Common myeloid progenitor, CD34-positive (primary cell): ENCODE measurements at regions of chr17 and their contacts with region 1.

Region 1: DNA sequence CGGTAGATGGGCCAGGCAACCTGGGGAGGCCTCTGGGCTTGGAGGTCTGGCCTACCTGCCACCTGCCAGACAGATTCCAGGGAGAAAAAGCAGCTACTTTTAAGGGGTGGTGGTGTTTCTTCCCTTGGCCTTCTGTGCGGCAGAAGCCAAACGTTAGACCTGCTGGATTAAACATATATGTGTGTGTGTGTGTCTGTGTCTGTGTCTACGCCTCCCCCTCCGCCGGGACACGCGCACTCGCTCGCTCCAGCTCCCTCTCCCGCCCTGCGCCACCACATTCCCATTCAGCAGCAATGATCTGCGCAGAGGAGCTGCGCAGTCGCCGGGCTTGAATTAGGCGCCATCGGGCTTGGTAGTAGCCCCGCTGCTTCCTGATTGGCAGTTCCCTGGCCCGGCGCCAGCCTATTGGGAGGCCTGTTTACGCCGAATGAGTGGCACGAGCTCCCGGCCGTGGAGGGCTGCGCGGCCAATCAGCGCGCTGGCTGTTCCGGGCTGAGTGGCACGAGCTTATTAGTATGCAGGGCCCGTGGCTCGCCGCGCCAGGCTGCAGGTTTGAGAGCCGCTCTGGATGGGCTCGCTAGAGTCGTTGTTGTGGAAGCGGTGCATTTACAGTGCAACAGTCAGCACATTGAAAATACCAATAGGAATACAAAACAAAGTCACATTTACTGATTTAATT is at the start of gene BAHCC1:
- DNase-seq: peak; percentile 99
- H3K4me3 ChIP-seq: peak within 1 kb of the TSS; percentile 46 to 93 (median 81)
- H3K27ac ChIP-seq: peak within 1 kb of the TSS; percentile 15 to 70
- H3K4me1 ChIP-seq: peaks cover 14 to 66% (median 63%) of the 10 kb centered on the region in 4 experiments
- H3K27me3 ChIP-seq: no peaks in the 10 kb centered on the region

Region 2: DNA sequence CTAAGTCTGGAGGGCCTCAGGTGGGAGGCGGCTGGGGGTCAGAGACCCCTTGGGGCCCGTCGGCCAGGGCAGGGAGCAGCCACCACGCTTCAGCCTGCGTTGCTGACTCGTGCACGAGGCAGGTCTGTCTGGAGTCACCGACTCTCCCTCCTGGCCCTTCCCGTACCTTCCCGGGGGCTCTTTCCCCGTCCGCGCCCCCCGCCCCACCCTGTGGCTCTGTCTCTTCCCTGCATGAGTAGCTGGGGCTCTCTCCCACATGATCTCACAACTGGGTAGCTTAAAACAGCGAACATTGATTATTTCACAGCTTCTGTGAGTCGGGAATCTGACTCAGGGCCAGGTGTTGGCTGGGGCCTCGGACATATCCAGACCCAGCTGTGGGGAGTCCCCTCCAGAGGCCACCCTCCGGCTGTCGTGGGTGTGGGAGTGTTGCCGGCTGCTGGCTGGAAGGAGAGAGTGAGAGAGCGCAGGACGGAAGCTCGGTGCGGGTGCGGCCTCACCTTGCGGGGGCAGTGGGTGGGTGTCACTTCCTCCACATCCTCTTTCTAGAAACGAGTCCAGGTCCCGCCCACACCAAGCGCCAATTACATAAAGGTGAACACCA is 17.5 kb after region 1 on chr17:
- CTCF ChIA-PET with region 1: interaction called, 24 read pairs
- POLR2A ChIA-PET with region 1: interaction called, 6 read pairs
- DNase-seq: peak; percentile 71 to 92 (median 89)
- H3K4me3 ChIP-seq: peak overlapping the region in 3 of 7 experiments; percentile 36 to 53 (median 48)
- H3K27ac ChIP-seq: no peak overlapping the region
- H3K4me1 ChIP-seq: peaks cover 2 to 65% (median 43%) of the 10 kb centered on the region in 4 experiments
- H3K27me3 ChIP-seq: no peaks in the 10 kb centered on the region

Region 3: GRCh38 chr17:81512560-81513371 is 117.7 kb after region 1 on chr17 and contains the start of gene ACTG1:
- CTCF ChIA-PET with region 1: interaction called, 3 read pairs
- POLR2A ChIA-PET with region 1: interaction called, 10 read pairs
- DNase-seq: peak; percentile 88 to 95 (median 94)
- H3K4me3 ChIP-seq: peak within 1 kb of the TSS; percentile 67 to 94 (median 90)
- H3K27ac ChIP-seq: peak within 1 kb of the TSS; percentile 40 to 79
- H3K4me1 ChIP-seq: peaks cover 4 to 62% (median 58%) of the 10 kb centered on the region in 4 experiments
- H3K27me3 ChIP-seq: no peaks in the 10 kb centered on the region